SK-MEL-5 (cell line): ENCODE measurements at regions of chr6 and their contacts with region 1.

Region 1: GRCh38 chr6:11043961-11044711 is at the start of gene ELOVL2:
- DNase-seq: peak; percentile 74
- total RNA-seq, gene ELOVL2: 29.7 and 30.4 TPM in 2 replicates

Region 2: GRCh38 chr6:10713962-10714361 is 330.2 kb before region 1 on chr6:
- in situ Hi-C with region 1: no loop called
- DNase-seq: no peak

Region 3: GRCh38 chr6:10962673-10963072 is 81.5 kb before region 1 on chr6:
- in situ Hi-C with region 1: loop called (anchors 10 kb)
- DNase-seq: no peak

Region 4: DNA sequence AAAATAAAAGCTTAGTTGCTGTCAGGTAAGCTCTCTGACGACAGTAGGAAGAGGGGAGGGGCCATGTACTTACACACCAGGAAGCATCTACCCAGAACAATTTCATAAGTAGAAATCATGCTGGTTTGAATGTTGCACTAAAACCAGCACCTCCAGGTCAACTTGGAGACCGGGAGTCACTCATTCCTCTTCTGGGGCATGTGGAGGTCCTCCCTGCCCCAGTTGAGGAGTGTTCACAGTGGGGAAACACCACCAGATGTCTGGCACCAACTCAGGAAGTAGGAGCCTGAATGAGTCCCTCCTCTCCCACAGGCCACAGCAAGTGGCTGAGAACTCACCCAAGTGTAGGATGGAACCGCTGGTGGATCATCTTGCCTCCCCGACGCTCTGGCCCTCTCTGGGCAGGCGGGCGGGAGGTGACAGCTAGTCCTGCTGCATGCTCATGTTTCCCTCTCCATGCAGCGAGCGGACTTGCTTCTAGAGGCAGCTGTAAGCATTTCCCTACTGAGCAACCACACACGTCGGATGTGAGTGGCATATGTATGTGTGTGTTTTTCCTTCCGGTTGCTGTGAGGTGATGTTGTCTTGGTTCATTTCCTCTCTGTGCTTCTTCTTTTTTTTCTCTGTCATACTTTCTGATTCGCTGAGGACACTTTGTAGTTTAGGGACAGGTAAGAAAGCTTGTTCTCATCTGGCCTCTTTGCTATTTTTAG is 337.8 kb after region 1 on chr6:
- in situ Hi-C with region 1: no loop called
- DNase-seq: no peak

Region 5: GRCh38 chr6:11563793-11564192 is 519.7 kb after region 1 on chr6:
- in situ Hi-C with region 1: no loop called
- DNase-seq: no peak